Activated CD8-positive, alpha-beta T cell treated with anti-CD3 and anti-CD28 coated beads for 36 hours (primary cell): ENCODE measurements at regions of chr5 and their contacts with region 1.

Region 1: GRCh38 chr5:399296-400281 is 43.4 kb upstream of the EXOC3 start:
- DNase-seq: peak; percentile 77
- ATAC-seq: peak; percentile 71
- H3K4me3 Mint-ChIP-seq: peak overlapping the region; percentile 42
- H3K27ac Mint-ChIP-seq: peak overlapping the region; percentile 89
- H3K4me1 Mint-ChIP-seq: peaks cover 39% of the 10 kb centered on the region
- H3K27me3 Mint-ChIP-seq: peaks cover 9% of the 10 kb centered on the region
- CTCF ChIP-seq: no peak

Region 2: DNA sequence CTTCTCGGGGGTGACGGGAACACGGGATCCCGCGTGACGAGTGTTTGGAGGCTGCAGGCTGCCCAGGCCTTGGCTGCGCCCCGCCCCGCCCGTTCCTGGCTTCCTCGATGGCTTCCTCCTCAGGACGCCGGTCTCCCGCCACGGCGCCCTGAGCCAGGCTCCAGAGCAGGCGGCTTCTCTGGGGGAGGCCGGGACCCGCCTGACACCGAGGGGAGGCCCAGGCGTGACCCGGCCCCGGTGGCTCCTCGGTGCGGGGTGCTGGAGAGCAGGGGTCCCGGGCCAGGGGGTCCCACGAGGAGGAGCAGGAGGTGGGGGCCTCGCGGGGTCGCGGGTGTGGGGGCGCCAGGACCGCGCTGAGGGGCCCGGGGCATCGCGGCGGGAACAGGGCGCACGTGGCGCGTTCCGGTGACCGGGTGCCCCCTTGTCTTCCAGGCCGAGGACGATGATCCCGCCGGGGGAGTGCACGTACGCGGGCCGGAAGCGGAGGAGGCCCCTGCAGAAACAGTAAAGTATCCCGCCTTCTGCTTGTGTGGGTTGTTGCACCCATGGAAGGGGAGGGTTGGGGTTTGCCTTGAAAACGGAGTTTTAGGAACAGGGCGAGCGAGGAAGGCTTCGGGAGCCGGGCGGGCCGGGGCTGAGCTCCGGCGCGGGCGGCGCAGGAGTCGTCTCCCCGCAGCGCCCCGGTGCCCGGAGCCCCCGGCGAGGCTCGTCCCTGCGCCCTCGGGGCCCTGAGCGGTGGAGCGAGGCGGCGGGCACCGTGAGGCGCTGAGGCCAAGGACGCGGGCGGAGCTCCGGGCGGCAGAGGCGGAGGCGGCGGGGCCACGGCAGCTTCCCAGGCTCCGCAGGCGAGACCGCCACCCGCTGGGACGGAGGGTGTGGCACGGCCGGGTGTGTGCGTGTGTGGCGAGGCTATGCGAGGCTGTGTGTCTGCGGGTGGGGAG is 55.9 kb before region 1 on chr5:
- CTCF ChIA-PET with region 1: no interaction called
- POLR2A ChIA-PET with region 1: no interaction called
- intact Hi-C with region 1: loop called (anchors 10 kb)
- DNase-seq: peak; percentile 67
- ATAC-seq: peak; percentile 76
- H3K4me3 Mint-ChIP-seq: peak overlapping the region; percentile 71
- H3K27ac Mint-ChIP-seq: peak overlapping the region; percentile 85
- H3K4me1 Mint-ChIP-seq: peaks cover 28% of the 10 kb centered on the region
- H3K27me3 Mint-ChIP-seq: peaks cover 1% of the 10 kb centered on the region
- CTCF ChIP-seq: no peak